ENCODE measurements at regions of chr14 and their contacts with region 1.

Region 1: DNA sequence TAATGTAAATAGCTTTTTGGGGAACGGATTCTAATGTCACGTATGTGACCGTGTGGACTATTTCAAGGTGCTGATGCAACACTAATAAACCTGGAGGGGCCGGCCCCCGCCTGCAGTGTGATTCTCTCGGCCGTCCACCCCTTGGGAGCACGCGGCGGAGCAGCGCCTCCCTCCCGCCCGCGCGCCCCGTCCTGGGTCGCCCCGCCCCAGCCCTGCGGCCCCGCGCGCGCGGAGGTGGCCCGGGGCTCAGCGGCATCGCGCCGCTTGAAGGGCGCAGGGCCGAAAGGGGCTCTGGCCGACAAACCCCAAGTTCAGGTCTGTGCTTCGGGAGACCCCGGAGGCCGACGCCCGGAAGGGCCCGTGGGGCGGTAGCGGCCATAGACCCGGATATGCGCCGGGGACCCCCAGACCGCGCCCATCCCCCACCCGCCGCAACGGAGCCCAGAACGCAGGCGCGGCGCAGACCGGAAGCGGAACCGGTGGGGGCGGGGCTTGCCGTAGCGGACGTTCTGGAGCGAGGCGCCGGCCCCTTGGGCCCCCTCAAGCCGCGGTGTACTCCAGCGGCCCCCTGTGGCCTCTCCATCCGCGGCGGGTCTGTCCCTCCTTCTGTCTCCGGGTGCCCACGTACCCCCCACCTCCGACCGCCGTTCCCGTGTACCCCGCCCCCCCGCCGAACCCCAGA is at the start of gene TEX22:
- DNase-seq: peak; percentile 90
- H3K4me3 Mint-ChIP-seq: peak within 1 kb of the TSS; percentile 85
- H3K27ac Mint-ChIP-seq: peak within 1 kb of the TSS; percentile 83
- H3K4me1 Mint-ChIP-seq: peaks cover 26% of the 10 kb centered on the region
- H3K27me3 Mint-ChIP-seq: no peaks in the 10 kb centered on the region
- total RNA-seq, gene TEX22: 2.0 to 2.6 TPM

Region 2: GRCh38 chr14:105369653-105370040 is 28.5 kb before region 1 on chr14:
- CTCF ChIA-PET with region 1: interaction called, 11 read pairs
- intact Hi-C with region 1: no loop called
- DNase-seq: no peak
- H3K4me3 Mint-ChIP-seq: no peak overlapping the region
- H3K27ac Mint-ChIP-seq: no peak overlapping the region
- H3K4me1 Mint-ChIP-seq: peaks cover 4% of the 10 kb centered on the region
- H3K27me3 Mint-ChIP-seq: no peaks in the 10 kb centered on the region

Region 3: DNA sequence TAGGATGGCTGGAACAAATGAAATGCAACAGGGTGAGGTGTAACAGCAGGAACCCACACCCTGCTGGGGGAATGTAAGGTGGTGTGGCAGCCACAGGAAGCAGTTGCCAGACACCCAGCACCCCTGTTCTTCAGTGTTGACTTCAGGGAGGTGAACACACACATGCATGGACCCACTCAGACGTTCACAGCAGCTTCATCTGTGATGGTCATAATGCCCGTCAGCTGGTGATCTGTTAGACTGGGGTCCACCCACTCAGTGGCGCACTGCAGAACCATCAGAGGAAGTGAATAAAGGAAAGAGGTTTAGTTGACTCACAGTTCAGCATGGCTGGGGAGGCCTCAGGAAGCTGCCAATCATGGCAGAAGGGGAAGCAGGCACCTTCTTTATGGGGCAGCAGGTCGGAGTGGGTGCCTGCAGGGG is 22.5 kb before region 1 on chr14:
- CTCF ChIA-PET with region 1: interaction called, 11 read pairs
- intact Hi-C with region 1: loop called (anchors 1 kb)
- DNase-seq: peak; percentile 72
- H3K4me3 Mint-ChIP-seq: no peak overlapping the region
- H3K27ac Mint-ChIP-seq: no peak overlapping the region
- H3K4me1 Mint-ChIP-seq: peaks cover 12% of the 10 kb centered on the region
- H3K27me3 Mint-ChIP-seq: no peaks in the 10 kb centered on the region

Region 4: DNA sequence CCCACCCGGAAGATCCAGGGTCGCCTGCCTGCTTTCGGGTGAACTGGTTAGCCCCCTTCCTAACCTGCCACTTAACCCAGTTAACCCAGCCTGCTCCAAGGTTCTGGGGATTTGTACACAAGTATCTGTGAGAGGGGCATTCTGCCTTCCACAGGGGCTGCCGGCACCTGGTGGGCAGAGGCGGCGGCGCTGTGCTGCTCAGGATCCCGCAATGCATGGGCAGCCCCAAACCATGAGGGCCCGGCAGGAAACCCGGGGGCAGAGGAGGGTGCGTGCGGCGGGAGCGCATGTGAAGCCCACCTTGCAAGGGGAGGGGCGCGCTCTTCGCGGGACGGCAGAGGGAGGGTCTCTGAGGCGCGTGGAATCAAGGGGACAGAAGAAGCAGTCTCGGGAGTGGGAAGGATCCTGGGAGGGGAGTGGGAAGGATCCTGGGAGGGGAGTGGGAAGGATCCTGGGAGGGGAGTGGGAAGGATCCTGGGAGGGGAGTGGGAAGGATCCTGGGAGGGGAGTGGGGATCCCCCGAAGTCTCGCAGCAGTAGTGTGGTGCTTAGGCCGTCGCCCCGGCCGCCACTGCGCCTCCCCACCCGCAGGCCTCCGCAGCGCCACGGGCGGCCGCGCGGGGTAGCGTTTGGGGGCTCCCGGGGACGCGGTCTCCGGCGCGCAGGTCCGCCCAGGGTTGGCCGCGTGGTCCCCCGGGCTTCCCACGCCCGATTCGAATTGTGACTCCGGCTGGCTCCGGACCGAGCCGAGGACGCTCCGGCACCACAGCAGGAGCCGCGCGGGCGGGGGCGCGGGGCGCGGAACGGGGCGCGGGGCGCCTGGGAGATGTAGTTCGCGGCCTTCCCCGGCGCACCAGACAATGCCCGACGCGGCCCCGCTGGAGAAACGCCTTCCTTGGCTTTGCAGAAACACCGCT is 16.5 kb after region 1 on chr14:
- CTCF ChIA-PET with region 1: interaction called, 6 read pairs
- intact Hi-C with region 1: loop called (anchors 2 kb)
- DNase-seq: peak; percentile 65
- H3K4me3 Mint-ChIP-seq: peak overlapping the region; percentile 64
- H3K27ac Mint-ChIP-seq: no peak overlapping the region
- H3K4me1 Mint-ChIP-seq: peaks cover 9% of the 10 kb centered on the region
- H3K27me3 Mint-ChIP-seq: peaks cover 12% of the 10 kb centered on the region

Region 5: DNA sequence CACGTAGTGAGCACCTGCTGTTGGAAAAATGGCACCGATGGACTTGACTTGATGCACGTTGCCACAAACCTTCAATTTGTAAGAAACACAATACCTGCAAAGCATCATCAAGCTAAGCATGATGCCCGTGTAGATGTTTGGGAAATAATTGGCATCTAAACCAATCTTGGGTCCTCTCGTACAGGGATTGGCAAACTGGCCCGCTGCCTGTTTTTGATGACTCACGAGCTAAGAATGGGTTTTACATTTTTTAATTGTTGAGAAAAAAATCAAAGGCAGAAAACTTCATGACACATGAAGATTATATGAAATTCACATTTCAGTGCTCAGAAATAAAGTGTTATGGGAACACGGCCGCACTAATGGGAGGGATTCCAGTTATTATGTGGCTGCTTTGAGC is 32.4 kb after region 1 on chr14:
- CTCF ChIA-PET with region 1: no interaction called
- intact Hi-C with region 1: no loop called
- DNase-seq: no peak
- H3K4me3 Mint-ChIP-seq: no peak overlapping the region
- H3K27ac Mint-ChIP-seq: no peak overlapping the region
- H3K4me1 Mint-ChIP-seq: peaks cover 7% of the 10 kb centered on the region
- H3K27me3 Mint-ChIP-seq: no peaks in the 10 kb centered on the region

Measured in activated naive CD4-positive, alpha-beta T cell treated with anti-CD3 and anti-CD28 coated beads for 36 hours (primary cell).